ENCODE measurements at regions of chr19 and their contacts with region 1.

Region 1: DNA sequence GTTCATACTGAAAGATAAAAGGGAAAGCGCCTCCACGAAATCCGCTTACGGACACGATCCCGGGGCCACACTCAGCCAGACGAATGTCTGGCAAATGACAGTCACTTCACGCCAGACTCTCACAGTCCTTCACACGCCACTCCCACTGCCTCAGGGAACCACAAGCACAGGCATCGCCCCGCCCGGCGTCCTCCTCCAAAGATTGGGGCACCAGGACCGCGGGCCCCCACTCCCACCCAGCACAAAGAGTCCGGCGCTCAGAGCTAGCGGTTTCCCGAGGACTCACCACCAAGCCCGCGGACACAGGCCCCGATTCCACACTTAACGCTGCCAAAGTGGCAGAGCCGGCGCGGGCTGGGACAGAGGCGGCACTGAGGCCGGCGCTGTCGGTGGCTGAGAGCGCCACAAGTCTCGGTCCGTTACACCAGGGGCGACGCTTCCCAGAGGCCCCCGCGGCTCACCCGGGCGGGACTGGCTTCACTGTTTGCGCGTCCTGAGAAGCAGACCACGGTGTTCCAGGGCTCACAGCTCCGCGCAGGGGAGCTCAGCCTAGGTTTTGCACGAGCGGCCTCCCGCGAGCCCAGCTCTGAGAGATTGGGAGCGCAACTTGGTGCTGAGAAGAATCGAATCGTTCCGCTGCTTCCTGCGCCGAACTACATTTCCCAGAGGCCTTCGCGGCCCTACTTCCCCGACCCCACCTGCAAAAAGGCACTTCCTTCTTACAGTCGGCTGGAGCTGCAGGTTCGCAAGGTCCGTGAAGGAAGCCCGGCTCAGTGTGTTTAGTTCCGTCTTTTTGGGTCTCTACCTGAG is at the start of gene ZNF569:
- DNase-seq: peak; percentile 87
- H3K4me3 Mint-ChIP-seq: peak within 1 kb of the TSS; percentile 86
- H3K27ac Mint-ChIP-seq: peak within 1 kb of the TSS; percentile 89
- H3K4me1 Mint-ChIP-seq: peaks cover 19% of the 10 kb centered on the region
- H3K27me3 Mint-ChIP-seq: no peaks in the 10 kb centered on the region
- total RNA-seq, gene ZNF569: 3.5 and 3.8 TPM in 2 replicates

Region 2: DNA sequence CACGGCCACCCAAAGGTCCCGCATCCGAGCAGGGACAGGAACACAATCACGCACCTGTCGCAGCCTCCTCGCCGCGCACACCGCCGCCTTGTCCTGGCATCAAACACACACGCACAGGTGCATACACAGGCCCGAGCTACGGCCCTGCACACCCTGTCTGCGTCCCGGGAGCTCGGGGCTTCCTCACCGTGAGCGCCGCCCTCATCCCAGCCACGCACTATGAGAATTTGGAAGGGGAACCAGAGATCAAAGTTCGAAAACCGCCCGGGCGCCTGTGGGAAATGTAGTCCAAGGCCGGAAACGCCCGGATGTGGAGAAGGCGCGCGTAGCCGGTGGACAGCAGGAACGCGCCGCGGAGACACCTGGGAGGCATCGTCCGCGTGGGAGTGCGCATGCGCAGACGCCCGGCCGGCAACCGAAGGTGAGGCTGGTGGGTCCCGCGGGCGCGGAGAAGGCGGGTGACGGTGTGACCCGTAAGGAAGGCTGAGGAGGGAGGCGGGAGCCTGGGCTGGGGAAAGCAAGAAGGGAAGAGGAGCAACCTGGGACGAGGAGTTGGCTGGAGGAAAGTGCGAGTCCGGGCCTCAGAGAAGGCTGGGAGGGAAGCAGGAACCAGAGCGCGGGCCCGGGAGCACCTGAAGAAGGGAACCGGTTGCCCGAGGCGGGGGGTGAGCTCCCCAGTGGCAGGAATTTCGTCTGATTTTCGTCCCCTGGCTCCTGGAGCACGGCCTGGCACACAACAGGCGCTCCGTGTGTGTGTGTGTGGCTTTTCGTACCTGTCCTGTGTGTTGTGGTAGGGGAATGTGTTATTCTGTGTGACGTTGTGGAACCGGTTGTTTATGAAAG is 779.6 kb before region 1 on chr19 and contains the start of gene ZNF567:
- intact Hi-C with region 1: loop called (anchors 5 kb)
- DNase-seq: peak; percentile 96
- H3K4me3 Mint-ChIP-seq: peak within 1 kb of the TSS; percentile 95
- H3K27ac Mint-ChIP-seq: peak within 1 kb of the TSS; percentile 83
- H3K4me1 Mint-ChIP-seq: peaks cover 17% of the 10 kb centered on the region
- H3K27me3 Mint-ChIP-seq: no peaks in the 10 kb centered on the region
- total RNA-seq, gene ZNF567: 7.6 and 7.7 TPM in 2 replicates

Region 3: GRCh38 chr19:36973021-36973843 is 493.8 kb before region 1 on chr19:
- intact Hi-C with region 1: loop called (anchors 5 kb)
- DNase-seq: peak; percentile 58
- H3K4me3 Mint-ChIP-seq: peak overlapping the region; percentile 91
- H3K27ac Mint-ChIP-seq: peak overlapping the region; percentile 80
- H3K4me1 Mint-ChIP-seq: peaks cover 9% of the 10 kb centered on the region
- H3K27me3 Mint-ChIP-seq: no peaks in the 10 kb centered on the region

Region 4: GRCh38 chr19:37172368-37173366 is 294.3 kb before region 1 on chr19 and contains the start of gene ZNF585A:
- intact Hi-C with region 1: loop called (anchors 1 kb)
- DNase-seq: peak; percentile 82
- H3K4me3 Mint-ChIP-seq: no peak within 1 kb of the TSS
- H3K27ac Mint-ChIP-seq: no peak within 1 kb of the TSS
- H3K4me1 Mint-ChIP-seq: no peaks in the 10 kb centered on the region
- H3K27me3 Mint-ChIP-seq: no peaks in the 10 kb centered on the region
- total RNA-seq, gene ZNF585A: 4.1 and 4.2 TPM in 2 replicates

Region 5: DNA sequence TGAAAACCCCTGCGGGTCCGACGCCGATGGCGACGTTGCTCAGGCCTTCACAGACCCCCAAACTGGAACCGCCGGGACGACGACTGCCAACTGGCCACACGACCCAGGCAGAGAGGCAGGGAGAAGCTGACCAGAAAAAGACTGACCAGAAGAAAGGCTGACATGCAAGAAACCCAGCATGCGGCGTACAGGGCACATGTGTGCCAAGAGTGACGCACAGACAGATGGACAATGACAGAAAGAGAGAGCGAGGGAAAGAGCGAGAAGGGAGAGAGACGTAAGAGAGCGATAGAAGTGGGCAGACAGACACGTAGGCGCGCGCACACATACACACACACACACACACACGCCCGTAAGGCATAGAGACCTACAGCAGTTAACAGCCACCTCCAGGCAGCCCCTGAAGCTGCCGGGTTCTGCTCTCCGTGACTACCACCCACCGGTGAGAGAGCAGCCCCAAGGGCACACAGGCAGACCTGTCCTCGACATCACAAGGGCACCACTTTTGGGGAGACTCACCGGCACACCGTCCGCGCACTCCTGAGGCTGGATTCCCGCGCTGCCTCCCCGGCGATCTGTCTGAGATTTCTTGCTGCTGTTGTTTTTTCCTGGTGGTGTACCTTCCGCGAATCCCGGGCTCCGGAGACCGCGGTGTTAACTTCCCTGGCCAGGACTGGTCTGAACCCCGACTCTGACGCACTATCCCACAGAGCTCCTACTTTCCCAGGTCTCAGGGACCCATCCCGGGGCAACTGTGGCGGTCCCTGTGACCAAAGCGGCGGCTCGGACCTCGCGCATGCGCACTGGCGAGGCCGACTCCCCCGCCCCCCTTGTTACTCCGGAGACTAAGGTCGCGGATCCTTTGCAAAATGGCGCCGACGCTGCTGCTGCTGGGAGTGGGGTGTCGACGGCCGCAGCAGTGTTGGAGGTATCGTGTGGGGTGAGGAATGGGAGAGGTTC is 163.1 kb before region 1 on chr19:
- intact Hi-C with region 1: no loop called
- DNase-seq: no peak
- H3K4me3 Mint-ChIP-seq: peak overlapping the region; percentile 39
- H3K27ac Mint-ChIP-seq: no peak overlapping the region
- H3K4me1 Mint-ChIP-seq: no peaks in the 10 kb centered on the region
- H3K27me3 Mint-ChIP-seq: no peaks in the 10 kb centered on the region

Region 6: GRCh38 chr19:37346091-37346490 is 120.9 kb before region 1 on chr19:
- intact Hi-C with region 1: no loop called
- DNase-seq: no peak
- H3K4me3 Mint-ChIP-seq: no peak overlapping the region
- H3K27ac Mint-ChIP-seq: no peak overlapping the region
- H3K4me1 Mint-ChIP-seq: no peaks in the 10 kb centered on the region
- H3K27me3 Mint-ChIP-seq: no peaks in the 10 kb centered on the region

Region 7: DNA sequence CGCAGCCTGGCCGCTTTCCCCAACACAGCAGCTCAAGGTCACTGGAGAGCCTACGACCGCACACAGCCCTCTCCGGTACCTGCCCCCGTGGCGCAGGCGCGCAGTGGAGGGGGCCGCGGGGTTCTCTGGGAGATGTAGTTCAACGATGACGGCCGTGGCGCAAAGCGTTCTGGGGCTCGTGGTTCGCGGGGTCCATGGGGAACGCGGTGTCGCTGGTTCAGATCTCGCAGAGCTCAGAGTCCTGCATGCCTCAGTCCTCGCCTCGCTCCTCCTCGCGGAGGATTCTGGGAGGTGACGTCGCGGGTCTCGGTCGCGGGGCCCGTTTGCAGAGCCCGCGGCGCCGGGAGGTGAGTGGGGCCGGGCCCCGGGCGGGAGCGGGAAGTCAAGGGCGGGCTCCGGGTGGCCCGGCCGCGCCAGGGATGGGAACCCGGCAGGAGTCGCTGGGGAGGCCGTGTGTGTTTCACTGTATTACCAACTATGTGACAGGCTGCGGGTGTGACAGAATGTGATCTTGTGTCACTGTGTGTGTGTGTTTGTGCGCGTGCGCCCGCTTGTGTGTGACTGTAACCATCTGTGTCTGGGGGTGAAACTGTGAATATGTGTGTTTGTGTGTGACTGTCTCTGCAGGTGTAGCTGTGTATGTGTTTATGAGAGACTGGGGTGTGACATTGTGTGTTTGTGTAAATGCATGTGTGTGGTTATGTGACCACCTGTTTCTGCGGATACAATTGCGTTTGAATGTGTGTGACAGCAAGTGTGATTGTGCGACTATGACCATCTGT is 95.9 kb before region 1 on chr19 and contains the start of gene ZNF527:
- intact Hi-C with region 1: loop called (anchors 1 kb)
- DNase-seq: peak; percentile 96
- H3K4me3 Mint-ChIP-seq: peak within 1 kb of the TSS; percentile 90
- H3K27ac Mint-ChIP-seq: peak within 1 kb of the TSS; percentile 79
- H3K4me1 Mint-ChIP-seq: peaks cover 11% of the 10 kb centered on the region
- H3K27me3 Mint-ChIP-seq: no peaks in the 10 kb centered on the region
- total RNA-seq, gene ZNF527: 3.2 TPM in 2 replicates

Region 8: GRCh38 chr19:37655689-37656371 is 188.8 kb after region 1 on chr19:
- intact Hi-C with region 1: loop called (anchors 2 kb)
- DNase-seq: peak; percentile 85
- H3K4me3 Mint-ChIP-seq: peak overlapping the region; percentile 83
- H3K27ac Mint-ChIP-seq: peak overlapping the region; percentile 93
- H3K4me1 Mint-ChIP-seq: peaks cover 22% of the 10 kb centered on the region
- H3K27me3 Mint-ChIP-seq: no peaks in the 10 kb centered on the region

Measured in activated T-helper 2 cell treated with anti-CD3 and anti-CD28 coated beads, Interferon-gamma antibody, Interleukin-2, Interleukin-4, amounts not matched to agents 10 μg/mL and 5 μg/mL and 100 μg/mL, durations not matched to agents 14 hours and 24 hours and 36 hours (primary cell).